AG04450 (cell line): ENCODE measurements at regions of chr9 and their contacts with region 1.

Region 1: GRCh38 chr9:133075925-133076630 is 14.3 kb downstream of the CEL start:
- DNase-seq: peak; percentile 53
- H3K4me3 ChIP-seq: no peak overlapping the region
- H3K27ac ChIP-seq: no peak overlapping the region
- H3K27me3 ChIP-seq: peaks cover 22% of the 10 kb centered on the region
- CTCF ChIP-seq: no peak

Region 2: GRCh38 chr9:133030317-133031129 is 45.6 kb before region 1 on chr9 and contains the start of gene GTF3C5:
- CTCF ChIA-PET with region 1: no interaction called
- POLR2A ChIA-PET with region 1: interaction called, 10 read pairs
- DNase-seq: peak; percentile 96
- H3K4me3 ChIP-seq: peak within 1 kb of the TSS; percentile 96
- H3K27ac ChIP-seq: peak within 1 kb of the TSS; percentile 83
- H3K27me3 ChIP-seq: no peaks in the 10 kb centered on the region
- CTCF ChIP-seq: peak; percentile 14; the same call in 1 of the 2 replicates
- polyA plus RNA-seq, gene GTF3C5: 36.4 and 39.2 TPM in 2 replicates

Region 3: DNA sequence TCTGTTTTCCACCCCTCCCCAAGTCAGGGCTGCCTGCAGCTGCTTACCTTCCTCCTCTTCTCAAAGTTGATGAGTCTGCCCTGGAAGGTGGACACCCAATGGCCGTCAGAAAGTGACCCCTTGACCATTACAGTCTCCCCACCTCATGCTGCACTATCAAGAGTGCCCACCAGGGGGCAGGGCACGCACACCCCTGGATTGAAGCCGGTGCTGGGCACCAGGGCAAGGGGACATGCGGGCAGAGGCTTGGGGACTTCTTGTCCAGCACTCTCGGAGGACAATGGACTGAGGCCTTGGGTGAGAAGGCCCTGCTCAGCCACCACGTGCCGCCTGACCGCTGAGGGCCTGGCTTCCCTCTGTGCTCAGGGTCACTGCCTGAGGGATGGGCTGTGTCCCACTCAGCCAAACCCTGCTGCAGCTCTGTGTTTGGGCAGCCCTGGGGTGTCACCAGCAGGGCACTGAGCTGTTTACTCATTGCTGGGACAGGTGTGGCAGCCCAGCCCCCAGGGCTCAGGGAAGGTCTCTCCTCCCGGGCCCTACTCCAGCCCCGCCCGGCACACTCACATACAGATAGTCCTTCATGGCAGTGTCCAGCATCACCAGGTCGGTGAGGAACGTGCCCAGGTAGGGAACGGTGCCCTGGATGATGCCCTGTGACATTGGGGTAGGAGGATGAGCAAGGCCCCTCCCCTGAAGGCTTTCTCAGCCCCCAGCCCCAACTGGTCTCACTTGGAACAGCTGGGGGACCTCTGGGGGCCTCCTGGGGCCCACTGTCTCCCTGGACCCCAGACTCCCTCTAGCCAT is 27.3 kb after region 1 on chr9:
- CTCF ChIA-PET with region 1: interaction called, 15 read pairs
- POLR2A ChIA-PET with region 1: no interaction called
- DNase-seq: no peak
- H3K4me3 ChIP-seq: no peak overlapping the region
- H3K27ac ChIP-seq: no peak overlapping the region
- H3K27me3 ChIP-seq: no peaks in the 10 kb centered on the region
- CTCF ChIP-seq: peak; percentile 97